Activated CD8-positive, alpha-beta T cell treated with anti-CD3 and anti-CD28 coated beads for 36 hours (primary cell): ENCODE measurements at regions of chr17 and their contacts with region 1.

Region 1: GRCh38 chr17:1648963-1649843 is 463 bp downstream of the RILP start:
- DNase-seq: peak; percentile 95
- ATAC-seq: peak; percentile 72
- H3K4me3 Mint-ChIP-seq: peak overlapping the region; percentile 63
- H3K27ac Mint-ChIP-seq: peak overlapping the region; percentile 46
- H3K4me1 Mint-ChIP-seq: peaks cover 35% of the 10 kb centered on the region
- H3K27me3 Mint-ChIP-seq: no peaks in the 10 kb centered on the region
- CTCF ChIP-seq: peak; percentile 82

Region 2: DNA sequence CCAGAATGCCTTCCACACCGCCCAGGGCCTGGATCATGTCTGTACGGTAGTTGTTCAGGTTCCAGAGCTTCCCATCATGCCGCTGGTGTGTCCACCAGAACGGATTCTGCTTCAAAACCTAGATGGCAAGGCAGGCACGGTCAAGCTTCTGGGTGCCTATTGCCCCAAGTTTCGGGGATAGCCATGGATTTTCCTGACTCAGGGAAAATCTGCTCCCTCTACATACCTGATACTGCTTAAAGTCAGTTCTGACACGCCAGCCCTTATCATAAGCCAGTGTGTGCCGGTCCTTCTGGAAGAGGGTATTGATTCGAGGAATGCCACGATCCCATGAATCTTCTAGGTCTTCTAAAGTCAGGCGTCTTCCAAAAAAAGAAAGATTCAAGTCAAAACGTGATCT is 11.8 kb after region 1 on chr17:
- CTCF ChIA-PET with region 1: interaction called, 12 read pairs
- POLR2A ChIA-PET with region 1: interaction called, 8 read pairs
- intact Hi-C with region 1: no loop called
- DNase-seq: no peak
- ATAC-seq: no peak
- H3K4me3 Mint-ChIP-seq: no peak overlapping the region
- H3K27ac Mint-ChIP-seq: no peak overlapping the region
- H3K4me1 Mint-ChIP-seq: no peaks in the 10 kb centered on the region
- H3K27me3 Mint-ChIP-seq: no peaks in the 10 kb centered on the region
- CTCF ChIP-seq: no peak